GM12878 (cell line): ENCODE measurements at regions of chr7 and their contacts with region 1.

Region 1: DNA sequence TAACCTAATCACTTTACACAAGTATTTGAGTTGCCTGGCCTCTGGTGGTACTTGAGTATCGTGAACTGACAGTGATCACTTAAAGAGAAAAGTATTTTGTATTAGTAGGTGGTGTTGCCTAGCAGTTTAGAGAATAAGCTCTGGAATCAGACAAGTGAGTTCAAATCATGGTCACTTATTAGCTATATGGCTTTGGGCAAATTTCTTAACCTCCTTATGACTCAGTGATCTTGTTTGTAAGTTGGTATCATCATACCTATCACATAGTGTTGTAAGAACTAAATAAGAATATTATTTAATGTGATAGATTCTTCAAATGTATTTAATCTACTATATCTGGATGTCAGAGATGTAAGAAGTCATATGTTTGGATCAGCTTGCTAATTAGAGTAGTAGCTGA is 163.8 kb downstream of the RNF133 start:
- DNase-seq: no peak
- ATAC-seq: no peak
- H3K4me3 ChIP-seq: no peak overlapping the region
- H3K27ac ChIP-seq: no peak overlapping the region
- H3K4me1 ChIP-seq: no peaks in the 10 kb centered on the region
- H3K27me3 ChIP-seq: no peaks in the 10 kb centered on the region
- CTCF ChIP-seq: no peak
- EP300 ChIP-seq: no peak
- POLR2A ChIP-seq: no peak
- RAD21 ChIP-seq: no peak

Region 2: GRCh38 chr7:122143751-122144711 is 391.1 kb before region 1 on chr7 and contains the start of gene AASS:
- CTCF ChIA-PET with region 1: no interaction called
- POLR2A ChIA-PET with region 1: no interaction called
- RAD21 ChIA-PET with region 1: no interaction called
- SMC1A ChIA-PET with region 1: no interaction called
- in situ Hi-C with region 1: no loop called
- intact Hi-C with region 1: loop called (anchors 5 kb)
- DNase-seq: peak; percentile 48
- ATAC-seq: peak; percentile 98
- H3K4me3 ChIP-seq: peak within 1 kb of the TSS; percentile 94
- H3K27ac ChIP-seq: no peak within 1 kb of the TSS; the same call in 1 of the 2 replicates
- H3K4me1 ChIP-seq: no peaks in the 10 kb centered on the region
- H3K27me3 ChIP-seq: no peaks in the 10 kb centered on the region
- CTCF ChIP-seq: no peak
- EP300 ChIP-seq: no peak
- POLR2A ChIP-seq: no peak
- RAD21 ChIP-seq: no peak
- polyA plus RNA-seq, gene AASS: 0.09 to 0.11 TPM

Region 3: DNA sequence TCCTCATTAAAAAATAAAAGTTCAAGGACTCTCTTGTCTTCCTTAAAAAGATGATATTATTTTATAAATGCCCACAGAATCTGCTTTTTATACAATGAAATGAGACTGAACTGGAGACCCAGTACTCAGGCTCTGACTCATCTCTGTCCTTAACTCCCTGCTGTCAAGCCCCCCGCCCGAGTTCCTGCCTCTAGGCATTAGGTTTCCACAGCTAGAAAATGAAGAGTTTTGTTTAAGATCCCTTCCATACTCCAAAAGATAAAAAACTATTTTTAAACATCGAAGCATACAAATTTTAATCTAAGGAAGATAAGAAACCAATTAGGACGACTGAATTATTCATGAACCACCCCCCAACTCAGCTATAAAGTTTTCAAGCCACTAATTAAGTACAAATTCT is 132.9 kb before region 1 on chr7:
- CTCF ChIA-PET with region 1: no interaction called
- POLR2A ChIA-PET with region 1: no interaction called
- RAD21 ChIA-PET with region 1: no interaction called
- SMC1A ChIA-PET with region 1: no interaction called
- in situ Hi-C with region 1: no loop called
- intact Hi-C with region 1: no loop called
- DNase-seq: no peak
- ATAC-seq: no peak
- H3K4me3 ChIP-seq: no peak overlapping the region
- H3K27ac ChIP-seq: no peak overlapping the region
- H3K4me1 ChIP-seq: no peaks in the 10 kb centered on the region
- H3K27me3 ChIP-seq: no peaks in the 10 kb centered on the region
- CTCF ChIP-seq: no peak
- EP300 ChIP-seq: no peak
- POLR2A ChIP-seq: no peak
- RAD21 ChIP-seq: no peak

Region 4: DNA sequence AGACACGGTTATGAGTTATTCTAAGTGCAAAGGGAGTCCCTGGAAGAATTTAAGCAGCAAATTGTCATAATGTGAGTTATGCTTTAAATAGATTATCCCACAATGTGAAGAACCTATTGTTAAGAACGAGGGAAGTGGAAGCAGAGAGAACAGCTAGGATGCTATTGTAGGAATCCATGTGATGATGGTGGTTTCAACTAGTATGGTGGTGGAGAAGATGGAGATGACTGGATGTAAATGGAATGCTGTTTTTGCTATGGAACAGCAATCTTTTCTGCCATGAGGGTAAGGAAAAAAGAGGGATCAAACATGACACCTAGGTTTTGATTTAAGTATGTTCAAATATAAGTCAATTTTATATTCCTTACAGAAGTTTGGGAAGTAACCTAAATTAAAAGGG is 27.5 kb before region 1 on chr7:
- CTCF ChIA-PET with region 1: no interaction called
- POLR2A ChIA-PET with region 1: no interaction called
- RAD21 ChIA-PET with region 1: no interaction called
- SMC1A ChIA-PET with region 1: no interaction called
- in situ Hi-C with region 1: no loop called
- intact Hi-C with region 1: no loop called
- DNase-seq: no peak
- ATAC-seq: no peak
- H3K4me3 ChIP-seq: no peak overlapping the region
- H3K27ac ChIP-seq: no peak overlapping the region
- H3K4me1 ChIP-seq: no peaks in the 10 kb centered on the region
- H3K27me3 ChIP-seq: no peaks in the 10 kb centered on the region
- CTCF ChIP-seq: no peak
- EP300 ChIP-seq: no peak
- POLR2A ChIP-seq: no peak
- RAD21 ChIP-seq: no peak